ENCODE measurements at regions of chr3 and their contacts with region 1.

Region 1: GRCh38 chr3:138594150-138594934 is at the start of gene CEP70:
- DNase-seq: peak; percentile 95 to 99 (median 98)
- H3K4me3 ChIP-seq: peak within 1 kb of the TSS; percentile 63 to 97 (median 90)
- H3K27ac ChIP-seq: peak within 1 kb of the TSS; percentile 87 to 94
- H3K4me1 ChIP-seq: peaks cover 3 to 37% (median 21%) of the 10 kb centered on the region in 4 experiments
- H3K27me3 ChIP-seq: no peaks in the 10 kb centered on the region

Region 2: GRCh38 chr3:138296639-138297038 is 297.7 kb before region 1 on chr3:
- CTCF ChIA-PET with region 1: no interaction called
- POLR2A ChIA-PET with region 1: no interaction called
- DNase-seq: no peak
- H3K4me3 ChIP-seq: no peak overlapping the region
- H3K27ac ChIP-seq: no peak overlapping the region
- H3K4me1 ChIP-seq: no peaks in the 10 kb centered on the region
- H3K27me3 ChIP-seq: no peaks in the 10 kb centered on the region

Region 3: GRCh38 chr3:138479438-138479863 is 114.9 kb before region 1 on chr3:
- CTCF ChIA-PET with region 1: interaction called, 11 read pairs
- POLR2A ChIA-PET with region 1: no interaction called
- DNase-seq: peak; percentile 69 to 91 (median 84)
- H3K4me3 ChIP-seq: no peak overlapping the region
- H3K27ac ChIP-seq: no peak overlapping the region
- H3K4me1 ChIP-seq: peaks cover 0 to 4% (median 0%) of the 10 kb centered on the region in 4 experiments
- H3K27me3 ChIP-seq: no peaks in the 10 kb centered on the region

Region 4: DNA sequence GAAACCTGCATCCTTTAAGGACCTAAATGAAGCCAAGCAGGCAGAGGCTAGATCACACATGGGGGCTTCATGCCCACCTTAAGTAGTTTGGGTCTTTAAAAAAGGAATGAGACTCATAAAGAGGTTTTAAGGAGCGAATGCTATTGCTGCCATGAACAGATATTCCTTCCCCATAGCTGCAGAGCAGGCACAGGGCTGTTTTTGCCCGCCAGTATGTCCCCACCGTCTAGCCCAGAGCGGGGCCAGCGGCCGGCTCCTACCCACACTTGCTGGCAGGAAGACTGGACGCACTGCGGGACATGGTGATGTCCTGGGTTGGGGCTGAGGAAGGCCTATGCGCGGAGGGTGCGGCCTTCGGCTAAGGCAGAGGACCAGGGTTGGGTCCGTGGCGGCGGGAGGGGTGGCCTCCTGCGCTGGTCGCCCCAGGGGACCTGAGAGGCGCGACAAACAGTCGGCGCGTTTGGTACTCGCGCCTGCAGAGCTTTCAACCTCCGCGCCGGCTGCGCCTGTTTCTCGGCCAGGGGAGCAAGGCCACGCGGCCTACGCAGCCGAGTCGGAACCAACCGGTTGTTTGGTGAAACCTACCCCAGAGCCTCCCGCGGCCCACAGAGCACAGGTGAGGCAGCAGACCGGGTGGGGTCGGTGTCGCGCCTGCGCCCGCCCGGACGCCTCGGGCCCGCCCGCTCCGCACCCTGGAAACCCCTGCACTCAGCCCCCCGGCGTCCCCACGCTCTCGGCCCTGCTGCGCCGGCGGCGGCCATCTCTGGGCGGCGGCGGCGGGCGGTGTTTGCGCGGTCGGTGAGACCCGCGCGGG is 14.2 kb after region 1 on chr3 and contains the start of gene FAIM:
- CTCF ChIA-PET with region 1: interaction called, 17 read pairs
- POLR2A ChIA-PET with region 1: interaction called, 11 read pairs
- DNase-seq: peak; percentile 71 to 90 (median 84)
- H3K4me3 ChIP-seq: peak within 1 kb of the TSS; percentile 61 to 87 (median 77)
- H3K27ac ChIP-seq: peak within 1 kb of the TSS; percentile 79 to 87
- H3K4me1 ChIP-seq: peaks cover 0 to 17% (median 14%) of the 10 kb centered on the region in 4 experiments
- H3K27me3 ChIP-seq: no peaks in the 10 kb centered on the region

Region 5: DNA sequence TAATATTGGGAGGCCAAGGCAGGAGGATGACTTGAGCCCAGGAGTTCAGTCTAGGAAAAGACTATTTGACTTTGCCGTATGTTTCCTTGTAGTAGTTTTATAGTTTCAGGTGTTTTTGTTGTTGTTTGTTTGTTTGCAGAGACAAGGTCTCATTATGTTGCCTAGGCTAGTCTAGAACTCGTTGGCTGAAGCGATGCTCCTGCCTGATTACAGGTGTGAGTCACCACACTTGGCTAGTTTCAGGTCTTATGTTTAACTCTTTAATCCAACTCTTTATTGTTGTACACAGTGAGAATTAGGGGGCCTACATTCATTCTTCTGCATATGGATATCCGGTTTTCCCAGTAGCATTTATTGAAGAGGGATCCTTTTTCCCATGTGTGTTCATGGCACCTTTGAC is 46.2 kb after region 1 on chr3:
- CTCF ChIA-PET with region 1: no interaction called
- POLR2A ChIA-PET with region 1: no interaction called
- DNase-seq: peak in 1 of 3 donors; percentile 11
- H3K4me3 ChIP-seq: no peak overlapping the region
- H3K27ac ChIP-seq: no peak overlapping the region
- H3K4me1 ChIP-seq: no peaks in the 10 kb centered on the region
- H3K27me3 ChIP-seq: no peaks in the 10 kb centered on the region

Region 6: DNA sequence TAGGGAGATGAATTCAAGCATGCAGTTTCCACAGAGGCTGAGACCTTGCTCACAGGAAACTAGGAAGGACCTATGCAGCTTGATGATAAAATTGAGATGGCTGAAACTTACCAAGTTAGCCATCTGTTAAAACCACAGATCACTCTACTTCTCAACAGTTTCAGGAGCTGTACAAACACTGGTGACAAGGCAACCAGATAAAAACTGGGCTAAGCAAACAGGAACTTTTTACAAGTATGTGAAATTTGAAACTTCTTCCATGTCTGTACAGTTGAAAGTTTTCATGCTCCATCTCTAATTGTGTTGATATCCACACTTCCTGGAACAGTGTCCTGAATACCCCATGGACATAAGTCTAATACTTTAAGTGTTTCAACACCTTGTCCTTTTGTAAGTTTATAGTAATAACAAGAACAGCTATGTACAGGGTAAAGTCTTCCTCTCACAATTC is 92.5 kb after region 1 on chr3:
- CTCF ChIA-PET with region 1: interaction called, 31 read pairs
- POLR2A ChIA-PET with region 1: no interaction called
- DNase-seq: peak; percentile 91 to 98 (median 96)
- H3K4me3 ChIP-seq: no peak overlapping the region
- H3K27ac ChIP-seq: peak overlapping the region; percentile 80 to 90
- H3K4me1 ChIP-seq: peaks cover 9 to 70% (median 25%) of the 10 kb centered on the region in 4 experiments
- H3K27me3 ChIP-seq: no peaks in the 10 kb centered on the region

Region 7: GRCh38 chr3:138694287-138695007 is 100.1 kb after region 1 on chr3:
- CTCF ChIA-PET with region 1: interaction called, 31 read pairs
- POLR2A ChIA-PET with region 1: no interaction called
- DNase-seq: peak in 2 of 3 donors; percentile 53
- H3K4me3 ChIP-seq: no peak overlapping the region
- H3K27ac ChIP-seq: no peak overlapping the region
- H3K4me1 ChIP-seq: peaks cover 0 to 7% (median 1%) of the 10 kb centered on the region in 4 experiments
- H3K27me3 ChIP-seq: no peaks in the 10 kb centered on the region

Region 8: DNA sequence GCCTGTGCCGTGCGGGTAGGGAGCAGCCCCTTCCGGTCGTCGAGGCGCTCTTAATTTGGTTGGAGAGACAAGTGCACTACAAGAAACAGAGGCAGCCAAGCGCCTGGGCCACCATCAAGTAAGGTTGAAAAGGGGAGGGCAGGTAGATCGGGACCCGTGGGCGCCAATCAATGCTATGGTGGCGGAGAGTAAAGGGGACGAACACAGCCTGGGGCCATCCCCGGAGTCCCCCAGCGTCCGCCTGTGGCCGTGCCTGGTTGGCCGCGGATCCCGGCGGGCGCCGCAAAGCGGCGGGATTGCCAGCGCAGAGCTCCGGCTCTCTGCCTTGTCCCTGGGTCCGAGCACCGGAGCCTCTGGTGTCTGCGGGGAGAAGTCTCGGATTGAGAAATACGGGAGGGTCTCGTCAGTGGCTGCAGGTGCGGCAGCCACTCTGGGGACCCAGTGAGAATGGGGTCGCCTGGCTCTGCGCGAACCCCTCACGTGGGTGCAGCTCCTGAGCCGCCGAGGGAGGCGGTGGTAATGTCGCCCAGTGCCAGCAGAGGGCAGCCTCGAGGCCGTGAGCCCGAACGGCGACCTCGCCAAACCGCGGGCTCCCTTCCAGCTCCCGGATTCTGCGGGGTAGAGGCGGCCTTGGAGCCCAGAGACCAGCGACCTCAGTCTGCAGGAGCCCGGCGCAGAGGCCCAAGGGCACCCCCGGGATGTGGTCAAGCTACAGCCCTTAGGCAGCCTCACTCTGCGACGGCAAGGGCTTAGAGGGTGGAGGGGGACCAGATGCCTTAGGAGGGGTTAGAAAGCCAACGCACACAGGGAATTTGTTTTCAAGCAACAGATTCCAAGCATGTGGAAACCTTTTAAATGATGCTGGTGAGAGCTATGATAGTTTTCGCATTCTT is 341.8 kb after region 1 on chr3:
- CTCF ChIA-PET with region 1: interaction called, 10 read pairs
- POLR2A ChIA-PET with region 1: no interaction called
- DNase-seq: peak; percentile 59 to 72 (median 70)
- H3K4me3 ChIP-seq: peak overlapping the region; percentile 40 to 76 (median 58)
- H3K27ac ChIP-seq: no peak overlapping the region
- H3K4me1 ChIP-seq: peaks cover 2 to 46% (median 36%) of the 10 kb centered on the region in 4 experiments
- H3K27me3 ChIP-seq: peaks cover 4 to 76% (median 48%) of the 10 kb centered on the region in 5 experiments